Naive thymus-derived CD4-positive, alpha-beta T cell (primary cell): ENCODE measurements at regions of chr22 and their contacts with region 1.

Region 1: GRCh38 chr22:23786752-23787599 is at the start of gene SMARCB1:
- DNase-seq: peak; percentile 80 to 90 (median 87)
- ATAC-seq: peak; percentile 94
- H3K4me3 ChIP-seq: peak within 1 kb of the TSS; percentile 85
- H3K4me3 Mint-ChIP-seq: peak within 1 kb of the TSS; percentile 81 to 94 (median 91)
- H3K27ac ChIP-seq: peak within 1 kb of the TSS; percentile 99
- H3K27ac Mint-ChIP-seq: peak within 1 kb of the TSS; percentile 89 to 98 (median 96)
- H3K4me1 ChIP-seq: peaks cover 11 to 17% of the 10 kb centered on the region in 2 donors
- H3K4me1 Mint-ChIP-seq: peaks cover 13 to 54% (median 41%) of the 10 kb centered on the region in 7 donors
- H3K27me3 ChIP-seq: no peaks in the 10 kb centered on the region
- H3K27me3 Mint-ChIP-seq: no peaks in the 10 kb centered on the region
- total RNA-seq, gene SMARCB1: 47.1 to 81.1 (median 54.2) TPM

Region 2: DNA sequence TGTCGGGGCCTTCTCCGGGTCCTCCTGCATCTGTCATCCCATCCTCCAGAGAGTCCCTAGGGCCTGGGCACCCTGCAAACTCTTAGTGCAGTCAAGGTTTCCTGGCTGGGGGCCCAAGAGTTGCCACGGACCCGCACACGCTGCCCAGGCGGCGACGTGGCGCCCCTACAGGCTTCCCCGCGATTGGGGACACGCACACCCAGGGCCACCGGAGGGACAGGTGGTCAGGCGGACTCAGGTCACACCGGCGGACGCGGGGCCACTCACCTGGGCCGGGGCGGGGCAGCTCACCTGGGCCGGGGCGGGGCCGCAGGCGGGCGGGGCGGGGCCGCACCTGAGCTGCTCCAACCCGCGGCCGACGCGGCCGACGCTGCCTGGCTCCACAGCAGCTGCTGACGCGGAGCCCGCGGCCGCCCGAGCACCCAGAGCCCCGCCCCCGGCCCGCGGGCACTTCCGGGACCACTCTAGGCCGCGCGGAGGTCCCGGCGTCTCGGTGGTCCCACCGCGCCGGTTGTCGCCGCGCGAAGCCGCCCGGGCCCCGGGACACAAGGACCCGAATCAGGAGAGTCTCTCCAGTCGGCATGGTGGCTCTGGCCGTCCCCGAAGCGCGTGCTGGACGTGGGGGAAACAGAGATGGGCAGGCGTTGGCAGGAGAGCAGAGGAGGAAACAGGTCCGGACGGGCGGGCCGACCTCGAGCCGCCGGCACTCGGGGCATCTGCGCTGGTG is 36.1 kb before region 1 on chr22 and contains the start of gene ZNF70:
- CTCF ChIA-PET with region 1: no interaction called
- POLR2A ChIA-PET with region 1: interaction called, 7 read pairs
- intact Hi-C with region 1: loop called in 1 of 2 experiments (anchors 1 kb)
- DNase-seq: peak; percentile 78 to 88 (median 86)
- ATAC-seq: peak; percentile 99
- H3K4me3 ChIP-seq: peak within 1 kb of the TSS; percentile 79
- H3K4me3 Mint-ChIP-seq: peak within 1 kb of the TSS; percentile 63 to 88 (median 82)
- H3K27ac ChIP-seq: peak within 1 kb of the TSS; percentile 73
- H3K27ac Mint-ChIP-seq: peak within 1 kb of the TSS; percentile 37 to 91 (median 76)
- H3K4me1 ChIP-seq: peaks cover 0 to 9% of the 10 kb centered on the region in 2 donors
- H3K4me1 Mint-ChIP-seq: peaks cover 11 to 18% (median 13%) of the 10 kb centered on the region in 7 donors
- H3K27me3 ChIP-seq: no peaks in the 10 kb centered on the region
- H3K27me3 Mint-ChIP-seq: no peaks in the 10 kb centered on the region
- total RNA-seq, gene ZNF70: 3.1 to 7.9 (median 4.0) TPM

Region 3: DNA sequence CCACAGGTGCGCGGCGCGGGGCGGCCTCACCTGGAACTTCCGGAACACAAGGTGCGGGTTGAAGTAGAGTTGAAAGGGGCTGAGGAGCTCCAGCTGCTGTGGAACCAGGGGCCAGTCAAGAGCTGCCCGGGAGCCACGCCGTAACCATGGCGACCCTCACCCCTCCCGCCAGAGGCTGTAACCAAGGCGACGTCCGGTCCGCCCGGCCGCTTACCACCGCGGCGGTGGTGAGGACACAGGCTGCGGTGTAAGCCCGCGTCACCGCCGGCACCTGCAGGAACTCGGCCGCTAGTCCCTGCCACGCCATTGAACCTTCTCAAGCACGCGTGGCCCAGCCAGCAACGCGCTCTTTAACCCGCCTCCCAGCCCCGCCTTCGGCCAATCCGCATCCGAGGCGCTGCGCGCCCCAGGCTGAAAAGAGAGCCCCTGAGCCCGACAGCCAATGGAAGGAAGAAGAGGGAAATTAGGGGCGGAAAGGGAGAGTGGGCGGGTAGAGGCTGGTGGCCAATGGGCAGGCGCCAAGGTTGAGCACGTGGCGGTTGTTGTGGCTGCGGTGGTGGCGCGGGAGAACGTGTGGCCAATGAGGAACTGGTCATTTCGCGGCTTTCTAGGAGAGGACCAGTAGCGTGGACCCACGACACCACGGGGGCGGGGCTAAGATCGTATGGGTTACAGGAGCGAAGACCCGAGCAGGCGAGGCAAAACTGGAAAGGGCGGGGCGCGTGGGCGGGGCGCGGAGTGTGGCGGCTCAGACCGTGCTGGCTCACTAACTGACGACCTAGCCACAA is 51.9 kb after region 1 on chr22 and contains the start of gene DERL3:
- CTCF ChIA-PET with region 1: interaction called, 3 read pairs
- POLR2A ChIA-PET with region 1: no interaction called
- intact Hi-C with region 1: loop called (anchors 1 kb)
- DNase-seq: peak; percentile 80 to 97 (median 92)
- ATAC-seq: peak; percentile 94
- H3K4me3 ChIP-seq: peak within 1 kb of the TSS; percentile 70
- H3K4me3 Mint-ChIP-seq: peak within 1 kb of the TSS; percentile 81 to 96 (median 93)
- H3K27ac ChIP-seq: peak within 1 kb of the TSS; percentile 51
- H3K27ac Mint-ChIP-seq: peak within 1 kb of the TSS; percentile 43 to 97 (median 87)
- H3K4me1 ChIP-seq: peaks cover 4 to 5% of the 10 kb centered on the region in 2 donors
- H3K4me1 Mint-ChIP-seq: peaks cover 12 to 26% (median 20%) of the 10 kb centered on the region in 7 donors
- H3K27me3 ChIP-seq: no peaks in the 10 kb centered on the region
- H3K27me3 Mint-ChIP-seq: peaks cover 0 to 7% (median 0%) of the 10 kb centered on the region in 5 donors
- total RNA-seq, gene DERL3: 1.6 to 16.2 (median 6.5) TPM

Region 4: GRCh38 chr22:23893943-23894709 is 107.2 kb after region 1 on chr22 and contains the start of gene MIF:
- CTCF ChIA-PET with region 1: interaction called, 3 read pairs
- POLR2A ChIA-PET with region 1: interaction called, 12 read pairs
- intact Hi-C with region 1: loop called (anchors 1 kb)
- DNase-seq: peak; percentile 88 to 100 (median 94)
- ATAC-seq: peak; percentile 96
- H3K4me3 ChIP-seq: peak within 1 kb of the TSS; percentile 88
- H3K4me3 Mint-ChIP-seq: peak within 1 kb of the TSS; percentile 88 to 97 (median 94)
- H3K27ac ChIP-seq: peak within 1 kb of the TSS; percentile 93
- H3K27ac Mint-ChIP-seq: peak within 1 kb of the TSS; percentile 92 to 100 (median 97)
- H3K4me1 ChIP-seq: peaks cover 16% of the 10 kb centered on the region in 2 donors
- H3K4me1 Mint-ChIP-seq: peaks cover 12 to 39% (median 30%) of the 10 kb centered on the region in 7 donors
- H3K27me3 ChIP-seq: no peaks in the 10 kb centered on the region
- H3K27me3 Mint-ChIP-seq: no peaks in the 10 kb centered on the region
- total RNA-seq, gene MIF: 179 to 1,010 (median 197) TPM

Region 5: GRCh38 chr22:24011735-24012068 is 224.7 kb after region 1 on chr22:
- CTCF ChIA-PET with region 1: no interaction called
- POLR2A ChIA-PET with region 1: interaction called, 9 read pairs
- intact Hi-C with region 1: loop called in 1 of 2 experiments (anchors 1 kb)
- DNase-seq: peak in 2 of 9 donors; percentile 10 to 19
- ATAC-seq: no peak
- H3K4me3 ChIP-seq: peak overlapping the region; percentile 75
- H3K4me3 Mint-ChIP-seq: peak overlapping the region; percentile 88 to 98 (median 96)
- H3K27ac ChIP-seq: peak overlapping the region; percentile 78
- H3K27ac Mint-ChIP-seq: peak overlapping the region; percentile 93 to 99 (median 97)
- H3K4me1 ChIP-seq: peaks cover 4 to 10% of the 10 kb centered on the region in 2 donors
- H3K4me1 Mint-ChIP-seq: peaks cover 12 to 52% (median 39%) of the 10 kb centered on the region in 7 donors
- H3K27me3 ChIP-seq: no peaks in the 10 kb centered on the region
- H3K27me3 Mint-ChIP-seq: no peaks in the 10 kb centered on the region